A549 (cell line): ENCODE measurements at regions of chr9 and their contacts with region 1.

Region 1: GRCh38 chr9:98848450-98849149 is 41.1 kb downstream of the GALNT12 start:
- DNase-seq: peak; percentile 83 to 87
- ATAC-seq: peak; percentile 99 to 100
- H3K4me3 ChIP-seq: no peak overlapping the region
- H3K27ac ChIP-seq: no peak overlapping the region; a peak in 1 of 6 replicates
- H3K4me1 ChIP-seq: no peaks in the 10 kb centered on the region
- CTCF ChIP-seq: peak; percentile 93
- EP300 ChIP-seq: no peak
- POLR2A ChIP-seq: no peak
- RAD21 ChIP-seq: peak; percentile 87 to 95

Region 2: GRCh38 chr9:98860871-98861293 is 12.3 kb after region 1 on chr9:
- CTCF ChIA-PET with region 1: interaction called, 24 read pairs
- POLR2A ChIA-PET with region 1: no interaction called
- DNase-seq: peak; percentile 21 to 48
- ATAC-seq: peak; percentile 73 to 79; a peak in 5 of 6 replicates
- H3K4me3 ChIP-seq: no peak overlapping the region
- H3K27ac ChIP-seq: no peak overlapping the region
- H3K4me1 ChIP-seq: peaks cover 5% of the 10 kb centered on the region; the same call in 1 of the 3 replicates
- CTCF ChIP-seq: peak; percentile 21; the same call in 2 of the 3 replicates
- EP300 ChIP-seq: no peak
- POLR2A ChIP-seq: no peak
- RAD21 ChIP-seq: peak; percentile 49 to 55

Region 3: GRCh38 chr9:98974994-98975712 is 126.6 kb after region 1 on chr9:
- CTCF ChIA-PET with region 1: interaction called, 36 read pairs
- POLR2A ChIA-PET with region 1: no interaction called
- DNase-seq: peak; percentile 75 to 86
- ATAC-seq: peak; percentile 90 to 97
- H3K4me3 ChIP-seq: peak overlapping the region; percentile 24; the same call in 2 of the 3 replicates
- H3K27ac ChIP-seq: peak overlapping the region in 1 of 2 experiments; percentile 31; a peak in 1 of 6 replicates
- H3K4me1 ChIP-seq: peaks cover 4% of the 10 kb centered on the region; the same call in 1 of the 3 replicates
- CTCF ChIP-seq: peak; percentile 82
- EP300 ChIP-seq: no peak
- POLR2A ChIP-seq: no peak
- RAD21 ChIP-seq: peak; percentile 73 to 82

Region 4: GRCh38 chr9:99104459-99105151 is 256.0 kb after region 1 on chr9 and contains the start of gene TGFBR1:
- CTCF ChIA-PET with region 1: interaction called, 15 read pairs
- POLR2A ChIA-PET with region 1: interaction called, 3 read pairs
- DNase-seq: peak; percentile 87 to 89
- ATAC-seq: peak; percentile 86 to 90
- H3K4me3 ChIP-seq: peak within 1 kb of the TSS; percentile 83
- H3K27ac ChIP-seq: peak within 1 kb of the TSS; percentile 91 to 94
- H3K4me1 ChIP-seq: peaks cover 32% of the 10 kb centered on the region
- CTCF ChIP-seq: no peak
- EP300 ChIP-seq: no peak
- POLR2A ChIP-seq: no peak; the same call in 1 of the 2 replicates
- RAD21 ChIP-seq: no peak
- polyA plus RNA-seq, gene TGFBR1: 45.5 and 77.1 TPM in 2 replicates

Region 5: DNA sequence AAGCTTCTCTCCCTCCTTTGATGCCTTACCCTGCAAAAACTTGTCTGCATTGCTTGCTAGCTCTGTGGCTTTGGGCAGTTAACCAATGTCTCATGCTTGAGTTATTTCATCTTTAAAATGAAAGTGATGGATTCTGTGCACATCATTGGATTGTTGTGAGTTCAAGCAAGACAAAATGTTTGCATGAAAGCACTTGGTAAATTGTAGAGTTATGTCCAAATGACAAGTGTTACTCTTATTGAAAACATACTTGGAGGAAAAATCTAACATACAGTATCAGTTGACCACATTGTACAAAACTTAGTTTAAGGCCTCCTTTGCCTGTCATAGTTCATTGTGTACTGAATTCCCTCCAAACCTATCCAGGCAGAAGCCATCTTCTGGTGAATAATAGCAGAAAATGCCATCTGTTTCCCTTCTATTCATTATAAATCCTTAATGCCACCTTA is 286.3 kb after region 1 on chr9:
- CTCF ChIA-PET with region 1: interaction called, 90 read pairs
- POLR2A ChIA-PET with region 1: no interaction called
- DNase-seq: no peak
- ATAC-seq: no peak
- H3K4me3 ChIP-seq: no peak overlapping the region
- H3K27ac ChIP-seq: no peak overlapping the region
- H3K4me1 ChIP-seq: no peaks in the 10 kb centered on the region
- CTCF ChIP-seq: no peak
- EP300 ChIP-seq: no peak
- POLR2A ChIP-seq: no peak
- RAD21 ChIP-seq: no peak